ENCODE measurements at regions of chrX and their contacts with region 1.

Region 1: DNA sequence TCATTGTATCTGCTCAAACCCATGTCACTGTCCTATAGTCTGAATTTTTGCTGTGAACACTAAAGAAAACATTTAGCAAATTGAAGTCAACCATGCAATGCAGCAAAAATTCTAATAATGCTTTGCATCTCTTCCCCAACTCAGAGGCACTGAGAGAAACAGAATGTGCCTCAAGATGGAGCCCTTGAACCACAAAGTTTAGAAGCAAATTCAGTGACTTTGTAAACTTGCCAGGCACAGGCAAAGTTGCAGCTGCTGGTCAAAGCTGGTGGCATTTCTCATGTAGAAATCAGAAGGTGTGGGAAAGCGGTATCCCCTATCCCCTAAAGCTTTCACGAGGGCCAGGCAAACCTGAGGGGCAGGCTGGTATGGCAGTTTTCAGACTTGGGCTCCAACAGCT is 121.7 kb upstream of the DIPK2B start:
- DNase-seq: peak in 1 of 2 donors; percentile 43
- ATAC-seq: peak; percentile 26
- H3K4me3 ChIP-seq: no peak overlapping the region
- H3K27ac ChIP-seq: no peak overlapping the region
- H3K4me1 ChIP-seq: no peaks in the 10 kb centered on the region
- H3K27me3 ChIP-seq: no peaks in the 10 kb centered on the region

Region 2: DNA sequence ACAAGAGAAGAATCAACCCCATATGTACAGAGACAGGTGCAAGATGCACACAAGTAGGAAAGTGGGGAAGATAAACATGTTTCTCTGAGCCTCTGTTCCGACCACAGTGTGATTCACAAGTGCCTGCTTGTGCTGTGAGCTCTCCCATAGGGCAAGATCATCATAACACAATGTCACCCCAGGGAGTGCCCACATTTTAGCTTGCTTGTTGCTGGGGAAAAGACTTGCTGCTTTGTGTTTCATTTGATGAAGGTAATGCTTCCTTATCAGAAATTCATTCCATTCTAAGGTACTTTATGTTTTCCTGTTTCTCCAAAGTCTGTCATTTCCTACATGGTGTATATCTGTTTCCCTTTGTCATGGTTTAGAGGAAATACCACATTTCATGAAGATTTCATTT is 182.8 kb after region 1 on chrX:
- intact Hi-C with region 1: loop called (anchors 10 kb)
- DNase-seq: no peak
- ATAC-seq: no peak
- H3K4me3 ChIP-seq: no peak overlapping the region
- H3K27ac ChIP-seq: no peak overlapping the region
- H3K4me1 ChIP-seq: peaks cover 0 to 3% of the 10 kb centered on the region in 2 donors
- H3K27me3 ChIP-seq: no peaks in the 10 kb centered on the region

Region 3: DNA sequence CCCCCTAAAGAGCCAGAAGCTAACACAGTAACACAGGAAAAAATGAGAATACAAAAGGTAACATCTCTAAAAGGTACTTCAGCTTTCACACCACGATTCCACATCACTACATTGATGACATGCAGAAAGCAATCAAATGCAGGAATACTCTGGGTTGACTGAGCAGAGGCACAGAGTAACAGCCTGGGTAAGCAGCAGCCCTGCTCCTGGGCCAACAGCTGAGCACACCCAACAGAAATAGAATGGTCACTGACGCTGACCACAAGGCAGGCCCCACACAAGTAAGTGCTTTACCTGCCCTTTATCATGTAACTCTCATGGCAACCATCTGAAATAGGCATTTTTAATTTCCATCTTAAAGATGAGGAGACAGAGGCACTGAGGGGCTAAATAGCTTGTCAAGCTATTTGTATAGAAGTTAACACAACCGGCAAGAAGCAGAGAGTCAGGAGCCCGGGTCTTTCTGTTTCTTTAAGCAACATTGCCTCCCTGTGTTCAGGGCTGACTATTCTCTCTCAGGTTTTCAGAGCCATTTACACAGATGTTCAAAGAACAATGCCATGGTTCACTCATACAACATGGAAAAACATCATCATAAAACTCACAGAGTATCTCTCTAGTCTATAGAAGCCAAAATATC is 1054.0 kb after region 1 on chrX:
- intact Hi-C with region 1: loop called in 1 of 2 experiments (anchors 10 kb)
- DNase-seq: no peak
- ATAC-seq: peak; percentile 62
- H3K4me3 ChIP-seq: no peak overlapping the region
- H3K27ac ChIP-seq: no peak overlapping the region
- H3K4me1 ChIP-seq: no peaks in the 10 kb centered on the region
- H3K27me3 ChIP-seq: no peaks in the 10 kb centered on the region

Region 4: GRCh38 chrX:46408553-46409407 is 1086.4 kb after region 1 on chrX:
- intact Hi-C with region 1: loop called (anchors 5 kb)
- DNase-seq: peak; percentile 83 to 91
- ATAC-seq: no peak
- H3K4me3 ChIP-seq: no peak overlapping the region
- H3K27ac ChIP-seq: no peak overlapping the region
- H3K4me1 ChIP-seq: no peaks in the 10 kb centered on the region
- H3K27me3 ChIP-seq: no peaks in the 10 kb centered on the region